ENCODE measurements at regions of chr11 and their contacts with region 1.

Region 1: DNA sequence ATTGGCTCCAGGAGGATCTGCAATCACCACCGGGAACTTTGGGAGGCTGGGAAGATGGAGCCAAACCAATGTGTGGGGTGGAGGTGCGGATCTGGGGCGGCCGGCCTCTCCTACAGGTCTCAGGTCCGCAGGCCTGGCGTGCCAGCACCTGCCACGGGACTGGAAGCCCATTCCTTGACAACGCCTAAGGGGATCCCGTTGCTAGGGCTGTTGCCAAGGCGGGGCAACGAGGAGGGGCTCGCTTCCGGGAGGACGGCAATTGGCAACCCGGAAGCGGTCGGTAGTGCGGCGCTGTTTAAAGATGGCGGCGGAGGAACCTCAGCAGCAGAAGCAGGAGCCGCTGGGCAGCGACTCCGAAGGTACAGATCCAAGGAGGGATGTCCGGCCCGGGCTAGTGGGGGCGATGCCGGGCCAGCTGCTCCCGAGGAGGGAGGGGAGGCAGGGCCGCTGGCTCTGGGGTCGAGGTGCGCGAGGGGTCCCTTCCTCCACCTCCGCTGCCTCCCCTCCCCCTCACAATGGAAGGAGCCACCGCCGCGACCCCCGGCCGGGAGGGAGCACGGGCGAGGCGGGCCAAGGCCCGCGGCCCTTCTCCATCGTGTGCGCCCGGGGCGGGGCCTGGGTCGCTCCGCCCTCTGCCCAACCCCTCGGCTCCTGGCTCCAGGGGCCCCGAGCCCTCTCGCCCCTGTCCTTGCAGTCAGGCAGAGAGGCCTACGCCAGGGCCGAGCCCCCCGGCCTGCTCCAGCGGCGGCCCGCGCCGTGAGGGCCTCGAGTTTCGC is at the start of gene OTUB1:
- H3K4me3 Mint-ChIP-seq: peak within 1 kb of the TSS; percentile 96
- H3K27ac Mint-ChIP-seq: peak within 1 kb of the TSS; percentile 97
- H3K4me1 Mint-ChIP-seq: peaks cover 42% of the 10 kb centered on the region
- H3K27me3 Mint-ChIP-seq: no peaks in the 10 kb centered on the region

Region 2: GRCh38 chr11:63974259-63975143 is 11.8 kb before region 1 on chr11 and contains the start of gene COX8A:
- intact Hi-C with region 1: loop called (anchors 1 kb)
- H3K4me3 Mint-ChIP-seq: peak within 1 kb of the TSS; percentile 99
- H3K27ac Mint-ChIP-seq: peak within 1 kb of the TSS; percentile 99
- H3K4me1 Mint-ChIP-seq: peaks cover 47% of the 10 kb centered on the region
- H3K27me3 Mint-ChIP-seq: peaks cover 2% of the 10 kb centered on the region